ENCODE measurements at regions of chr19 and their contacts with region 1.

Region 1: DNA sequence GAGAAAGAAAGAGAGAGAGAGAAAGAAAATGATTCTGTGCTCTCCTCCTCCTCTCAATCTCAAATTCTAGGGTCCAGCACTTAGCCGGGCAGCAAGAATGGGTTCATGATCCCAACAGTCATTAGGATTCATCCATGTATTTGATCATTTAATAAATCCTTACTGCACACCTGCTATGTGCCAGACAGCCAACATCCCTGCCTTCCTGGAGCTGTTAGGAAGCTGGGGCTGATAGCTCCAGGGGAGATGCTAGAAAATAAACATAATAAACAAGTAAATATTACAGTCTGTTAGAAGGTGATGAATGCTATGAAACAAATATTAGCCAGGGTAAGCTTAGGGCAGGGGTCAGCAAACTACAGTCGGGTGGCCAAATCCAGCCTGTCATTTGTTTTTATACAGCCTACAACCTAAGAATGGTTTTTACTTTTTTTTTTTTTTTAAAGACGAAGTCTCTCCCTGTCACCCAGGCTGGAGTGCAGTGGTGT is 9.9 kb upstream of the ACP7 start:
- DNase-seq: no peak
- ATAC-seq: no peak
- H3K4me3 Mint-ChIP-seq: peak overlapping the region; percentile 23
- H3K27ac Mint-ChIP-seq: peak overlapping the region; percentile 89
- H3K4me1 Mint-ChIP-seq: peaks cover 28% of the 10 kb centered on the region
- H3K27me3 Mint-ChIP-seq: peaks cover 12% of the 10 kb centered on the region

Region 2: DNA sequence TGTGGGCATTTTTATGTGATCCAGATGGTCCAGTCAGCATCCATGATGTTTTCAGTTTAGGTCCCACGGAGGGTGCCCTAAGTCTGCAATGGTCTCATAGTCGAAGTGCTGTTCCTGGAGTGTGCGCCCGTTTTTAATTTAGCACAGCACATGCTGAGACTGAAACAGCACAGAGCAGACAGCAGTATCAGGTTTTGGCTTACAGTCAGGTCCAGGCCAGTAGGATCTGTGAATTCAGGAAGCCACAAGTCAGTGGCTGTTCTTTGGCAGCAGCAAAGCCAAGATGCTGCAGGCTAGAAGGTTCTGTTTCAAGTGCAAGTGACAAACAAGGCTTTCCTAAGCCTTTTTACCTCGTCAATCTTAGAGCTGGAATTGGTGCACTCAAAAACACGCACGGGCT is 60.2 kb before region 1 on chr19:
- CTCF ChIA-PET with region 1: no interaction called
- POLR2A ChIA-PET with region 1: no interaction called
- DNase-seq: no peak
- ATAC-seq: no peak
- H3K4me3 Mint-ChIP-seq: no peak overlapping the region
- H3K27ac Mint-ChIP-seq: no peak overlapping the region
- H3K4me1 Mint-ChIP-seq: no peaks in the 10 kb centered on the region
- H3K27me3 Mint-ChIP-seq: peaks cover 7% of the 10 kb centered on the region

Region 3: DNA sequence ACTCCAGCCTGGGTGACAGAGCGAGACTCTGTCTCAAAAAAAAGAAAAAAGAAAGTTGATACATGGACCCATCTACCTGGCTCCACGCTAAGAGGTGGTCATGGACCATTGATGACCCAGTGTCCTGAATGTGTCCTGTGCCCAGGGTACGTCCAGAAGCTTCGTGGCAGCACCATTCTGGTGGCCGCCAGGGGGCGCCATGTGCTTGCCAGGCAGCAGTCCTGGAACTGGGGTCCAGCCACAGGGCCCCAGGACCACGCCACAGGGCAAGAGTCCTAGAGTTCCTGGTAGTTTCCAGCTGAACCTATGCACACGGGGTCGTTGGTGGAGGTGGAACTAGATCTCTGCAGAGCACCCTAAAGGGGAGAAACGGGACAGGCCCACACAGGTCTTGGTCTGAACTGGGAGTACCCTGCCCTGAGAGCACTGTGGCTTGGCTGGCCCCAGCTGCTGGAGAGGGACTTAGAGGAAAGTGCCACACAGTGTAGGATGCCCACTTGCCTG is 22.0 kb before region 1 on chr19:
- CTCF ChIA-PET with region 1: interaction called, 10 read pairs
- POLR2A ChIA-PET with region 1: no interaction called
- DNase-seq: peak; percentile 71
- ATAC-seq: peak; percentile 85
- H3K4me3 Mint-ChIP-seq: no peak overlapping the region
- H3K27ac Mint-ChIP-seq: peak overlapping the region; percentile 20
- H3K4me1 Mint-ChIP-seq: no peaks in the 10 kb centered on the region
- H3K27me3 Mint-ChIP-seq: peaks cover 4% of the 10 kb centered on the region

Region 4: DNA sequence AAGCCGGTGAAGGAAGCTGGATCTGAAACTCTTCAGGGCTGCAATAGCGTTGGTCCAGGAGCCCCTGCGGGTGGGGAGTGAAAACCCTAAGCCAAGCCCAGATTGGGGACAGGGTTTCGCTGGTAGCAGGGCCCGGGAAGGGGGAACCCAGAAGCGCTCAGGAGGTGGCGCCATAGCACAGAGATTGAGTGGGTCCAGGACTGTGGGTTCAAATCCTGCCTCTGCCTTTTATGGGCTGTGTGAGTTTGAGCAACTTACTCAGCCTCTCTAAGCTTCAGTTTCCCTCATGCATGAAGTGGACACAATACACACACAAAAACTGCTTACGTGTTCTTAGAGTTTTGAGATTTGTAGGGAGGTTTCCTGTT is 138.1 kb after region 1 on chr19:
- CTCF ChIA-PET with region 1: no interaction called
- POLR2A ChIA-PET with region 1: no interaction called
- DNase-seq: peak; percentile 80
- ATAC-seq: peak; percentile 91
- H3K4me3 Mint-ChIP-seq: no peak overlapping the region
- H3K27ac Mint-ChIP-seq: no peak overlapping the region
- H3K4me1 Mint-ChIP-seq: peaks cover 2% of the 10 kb centered on the region
- H3K27me3 Mint-ChIP-seq: peaks cover 15% of the 10 kb centered on the region